CD4-positive, alpha-beta T cell (primary cell): ENCODE measurements at regions of chr1 and their contacts with region 1.

Region 1: DNA sequence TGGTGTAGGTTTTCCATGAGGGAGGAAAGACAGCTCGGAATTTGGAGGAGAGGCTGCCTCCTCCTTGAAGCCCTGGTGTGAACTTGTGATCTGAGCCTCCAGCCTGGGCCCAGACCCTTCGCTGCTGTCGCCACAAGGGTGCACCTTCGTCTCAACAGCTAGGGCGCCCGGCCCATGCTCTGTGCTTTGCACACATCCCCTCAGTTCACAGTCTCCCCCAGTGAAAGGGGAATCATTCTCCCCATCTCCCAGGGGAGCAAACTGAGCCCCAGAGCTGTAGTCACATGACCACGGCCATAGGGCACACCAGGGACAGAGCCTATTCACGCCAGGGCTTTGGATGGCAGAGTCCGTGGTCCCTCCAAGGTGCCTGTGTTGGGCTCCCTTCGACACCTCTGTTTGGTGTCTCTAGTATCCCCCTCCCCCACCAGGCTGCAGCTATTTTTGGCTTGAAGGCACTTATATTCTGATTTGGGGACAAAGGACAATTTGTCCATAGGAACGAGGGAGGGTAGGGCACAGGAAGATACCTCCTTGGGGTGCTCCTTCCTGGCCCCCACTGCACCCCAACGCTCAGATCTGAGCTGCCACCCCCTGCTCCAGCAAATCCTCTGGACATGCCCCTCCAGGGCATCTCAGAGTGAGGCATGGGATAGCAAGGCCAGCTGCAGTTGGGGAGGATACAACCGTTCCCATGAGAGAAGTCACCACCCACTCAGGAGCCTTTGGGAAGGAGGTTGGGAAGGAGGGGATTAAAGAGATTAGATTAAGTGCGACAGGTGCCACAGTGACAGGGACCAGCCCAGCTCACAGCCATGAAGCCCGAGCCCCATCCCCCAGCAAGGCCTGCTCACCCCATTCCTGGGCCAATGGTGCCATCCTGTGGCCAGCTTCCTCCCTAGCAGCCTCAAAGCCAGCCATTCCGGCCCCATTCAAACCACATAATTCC is 15.7 kb downstream of the MATN1 start:
- DNase-seq: peak; percentile 40 to 74 (median 56)
- ATAC-seq: peak; percentile 88
- H3K4me3 ChIP-seq: no peak overlapping the region
- H3K4me3 Mint-ChIP-seq: no peak overlapping the region
- H3K27ac ChIP-seq: no peak overlapping the region
- H3K27ac Mint-ChIP-seq: no peak overlapping the region
- H3K4me1 ChIP-seq: no peaks in the 10 kb centered on the region
- H3K4me1 Mint-ChIP-seq: no peaks in the 10 kb centered on the region
- H3K27me3 ChIP-seq: peaks cover 0 to 6% of the 10 kb centered on the region in 2 experiments
- H3K27me3 Mint-ChIP-seq: peaks cover 19% of the 10 kb centered on the region
- CTCF ChIP-seq: peak; percentile 50

Region 2: DNA sequence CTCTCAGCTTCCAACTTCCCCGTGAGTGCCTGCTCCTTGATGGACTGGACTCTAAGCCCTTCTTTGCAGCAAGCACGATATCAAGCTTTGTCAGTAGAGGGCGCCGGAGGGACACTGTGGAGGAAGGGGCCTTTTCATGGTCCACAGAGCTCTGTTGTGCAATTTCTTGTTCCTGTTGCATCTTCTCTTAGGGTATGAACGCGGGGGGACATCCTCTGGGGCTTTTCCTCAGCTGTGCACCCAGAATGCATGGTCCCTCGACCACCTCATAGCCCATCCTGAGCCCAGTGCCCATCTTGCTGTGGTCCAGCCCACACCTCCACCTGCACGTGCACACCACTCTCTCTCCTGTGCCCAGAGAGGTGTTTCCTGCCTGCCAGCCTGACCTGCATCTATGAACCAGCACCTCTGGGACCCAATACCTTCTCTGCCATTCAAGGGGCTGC is 914.6 kb before region 1 on chr1:
- CTCF ChIA-PET with region 1: no interaction called
- POLR2A ChIA-PET with region 1: no interaction called
- intact Hi-C with region 1: loop called in 1 of 2 experiments (anchors 5 kb)
- DNase-seq: peak in 13 of 14 experiments; percentile 9 to 55 (median 23)
- ATAC-seq: no peak
- H3K4me3 ChIP-seq: no peak overlapping the region
- H3K4me3 Mint-ChIP-seq: no peak overlapping the region
- H3K27ac ChIP-seq: no peak overlapping the region
- H3K27ac Mint-ChIP-seq: no peak overlapping the region
- H3K4me1 ChIP-seq: no peaks in the 10 kb centered on the region
- H3K4me1 Mint-ChIP-seq: no peaks in the 10 kb centered on the region
- H3K27me3 ChIP-seq: peaks cover 2 to 5% of the 10 kb centered on the region in 2 experiments
- H3K27me3 Mint-ChIP-seq: peaks cover 34% of the 10 kb centered on the region
- CTCF ChIP-seq: peak; percentile 13

Region 3: GRCh38 chr1:30322859-30323257 is 384.8 kb before region 1 on chr1:
- CTCF ChIA-PET with region 1: no interaction called
- POLR2A ChIA-PET with region 1: no interaction called
- intact Hi-C with region 1: no loop called
- DNase-seq: no peak
- ATAC-seq: no peak
- H3K4me3 ChIP-seq: no peak overlapping the region
- H3K4me3 Mint-ChIP-seq: no peak overlapping the region
- H3K27ac ChIP-seq: no peak overlapping the region
- H3K27ac Mint-ChIP-seq: no peak overlapping the region
- H3K4me1 ChIP-seq: no peaks in the 10 kb centered on the region
- H3K4me1 Mint-ChIP-seq: no peaks in the 10 kb centered on the region
- H3K27me3 ChIP-seq: peaks cover 0 to 5% of the 10 kb centered on the region in 2 experiments
- H3K27me3 Mint-ChIP-seq: peaks cover 30% of the 10 kb centered on the region
- CTCF ChIP-seq: no peak

Region 4: GRCh38 chr1:30379684-30380624 is 327.7 kb before region 1 on chr1:
- CTCF ChIA-PET with region 1: no interaction called
- POLR2A ChIA-PET with region 1: no interaction called
- intact Hi-C with region 1: loop called in 1 of 2 experiments (anchors 10 kb)
- DNase-seq: peak in 13 of 14 experiments; percentile 10 to 78 (median 33)
- ATAC-seq: peak; percentile 48
- H3K4me3 ChIP-seq: no peak overlapping the region
- H3K4me3 Mint-ChIP-seq: no peak overlapping the region
- H3K27ac ChIP-seq: no peak overlapping the region
- H3K27ac Mint-ChIP-seq: no peak overlapping the region
- H3K4me1 ChIP-seq: peaks cover 5% of the 10 kb centered on the region
- H3K4me1 Mint-ChIP-seq: no peaks in the 10 kb centered on the region
- H3K27me3 ChIP-seq: peaks cover 4 to 11% of the 10 kb centered on the region in 2 experiments
- H3K27me3 Mint-ChIP-seq: peaks cover 36% of the 10 kb centered on the region
- CTCF ChIP-seq: peak; percentile 75

Region 5: GRCh38 chr1:31122101-31122735 is 414.5 kb after region 1 on chr1:
- CTCF ChIA-PET with region 1: no interaction called
- POLR2A ChIA-PET with region 1: no interaction called
- intact Hi-C with region 1: no loop called
- DNase-seq: no peak
- ATAC-seq: no peak
- H3K4me3 ChIP-seq: no peak overlapping the region
- H3K4me3 Mint-ChIP-seq: no peak overlapping the region
- H3K27ac ChIP-seq: no peak overlapping the region
- H3K27ac Mint-ChIP-seq: no peak overlapping the region
- H3K4me1 ChIP-seq: no peaks in the 10 kb centered on the region
- H3K4me1 Mint-ChIP-seq: no peaks in the 10 kb centered on the region
- H3K27me3 ChIP-seq: no peaks in the 10 kb centered on the region
- H3K27me3 Mint-ChIP-seq: no peaks in the 10 kb centered on the region
- CTCF ChIP-seq: no peak